Activated CD4-positive, alpha-beta memory T cell treated with anti-CD3 and anti-CD28 coated beads for 36 hours (primary cell): ENCODE measurements at regions of chr9 and their contacts with region 1.

Region 1: GRCh38 chr9:117644133-117644931 is 59.9 kb upstream of the TLR4 start:
- DNase-seq: peak; percentile 69
- H3K4me3 Mint-ChIP-seq: no peak overlapping the region
- H3K27ac Mint-ChIP-seq: no peak overlapping the region
- H3K4me1 Mint-ChIP-seq: peaks cover 4% of the 10 kb centered on the region
- H3K27me3 Mint-ChIP-seq: peaks cover 10% of the 10 kb centered on the region

Region 2: DNA sequence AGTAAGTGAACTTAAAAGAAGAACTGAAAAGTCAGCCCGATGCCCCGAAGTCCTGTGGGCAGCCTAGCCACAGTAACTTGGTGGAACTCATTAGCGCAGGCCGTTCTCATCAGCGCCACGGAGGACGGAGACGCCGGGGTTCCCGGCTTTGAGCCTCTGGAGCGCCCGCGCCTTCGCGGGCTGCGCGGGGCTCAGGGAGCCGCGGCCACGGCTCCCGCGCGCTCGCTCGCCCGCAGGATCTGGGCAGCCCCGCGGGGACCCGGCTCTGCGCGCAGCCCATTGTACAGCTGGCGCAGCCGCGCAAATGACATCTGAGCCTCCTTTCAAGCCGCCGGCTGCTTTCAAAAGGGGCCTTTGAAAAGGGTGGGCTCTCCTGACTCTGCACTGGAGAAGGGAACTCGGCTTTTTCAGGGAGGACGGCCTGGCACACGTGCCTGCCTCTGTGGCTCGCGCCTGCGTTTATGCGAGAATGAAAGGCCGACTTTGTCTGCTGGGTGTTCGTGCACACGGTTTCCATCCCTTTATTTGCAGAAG is 100.6 kb after region 1 on chr9:
- CTCF ChIA-PET with region 1: no interaction called
- POLR2A ChIA-PET with region 1: no interaction called
- intact Hi-C with region 1: no loop called
- DNase-seq: no peak
- H3K4me3 Mint-ChIP-seq: no peak overlapping the region
- H3K27ac Mint-ChIP-seq: no peak overlapping the region
- H3K4me1 Mint-ChIP-seq: peaks cover 3% of the 10 kb centered on the region
- H3K27me3 Mint-ChIP-seq: peaks cover 23% of the 10 kb centered on the region

Region 3: DNA sequence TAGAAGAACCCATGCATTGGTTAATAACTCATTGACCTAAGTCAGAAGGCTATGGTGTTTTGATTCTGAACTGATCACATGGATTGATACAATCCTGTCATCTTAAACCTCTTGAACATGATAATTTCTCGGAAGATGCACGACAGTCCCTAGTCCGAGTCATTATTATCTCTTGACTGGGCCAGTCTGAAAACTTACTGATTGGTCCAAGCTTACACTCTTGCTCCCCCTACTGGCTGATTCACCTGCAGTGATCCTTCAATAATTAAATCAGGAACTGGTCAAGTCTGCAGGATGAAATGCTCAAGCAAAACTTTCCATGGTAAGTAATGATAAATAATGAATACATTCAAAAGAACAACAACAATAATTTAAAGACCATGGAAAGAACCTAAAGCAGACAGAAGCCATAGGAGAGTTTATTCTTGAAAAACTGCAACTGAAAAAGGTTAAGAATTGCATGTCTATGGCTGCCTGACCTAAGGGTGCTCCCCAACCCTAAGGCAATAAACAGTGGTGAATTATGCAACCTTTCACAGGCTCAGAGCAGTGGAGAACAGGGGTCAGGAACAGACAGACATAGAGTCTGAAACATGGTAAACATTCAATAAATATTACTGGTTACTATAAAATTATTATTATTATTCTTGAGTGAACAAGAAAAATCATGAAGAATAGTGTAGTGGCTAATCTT is 1645.6 kb after region 1 on chr9:
- CTCF ChIA-PET with region 1: no interaction called
- POLR2A ChIA-PET with region 1: no interaction called
- intact Hi-C with region 1: loop called (anchors 10 kb)
- DNase-seq: peak; percentile 9
- H3K4me3 Mint-ChIP-seq: no peak overlapping the region
- H3K27ac Mint-ChIP-seq: no peak overlapping the region
- H3K4me1 Mint-ChIP-seq: no peaks in the 10 kb centered on the region
- H3K27me3 Mint-ChIP-seq: no peaks in the 10 kb centered on the region